Activated CD8-positive, alpha-beta T cell treated with anti-CD3 and anti-CD28 coated beads, Interleukin-2, amount 10 ng/mL, durations not matched to agents 7 days and 5 days (primary cell): ENCODE measurements at regions of chr6 and their contacts with region 1.

Region 1: GRCh38 chr6:3929281-3929798 is 80.2 kb downstream of the FAM50B start:
- DNase-seq: no peak
- ATAC-seq: no peak
- H3K4me3 Mint-ChIP-seq: no peak overlapping the region
- H3K27ac Mint-ChIP-seq: no peak overlapping the region
- H3K4me1 Mint-ChIP-seq: no peaks in the 10 kb centered on the region
- H3K27me3 Mint-ChIP-seq: peaks cover 5% of the 10 kb centered on the region

Region 2: GRCh38 chr6:3748208-3749066 is 180.9 kb before region 1 on chr6:
- CTCF ChIA-PET with region 1: interaction called, 23 read pairs
- POLR2A ChIA-PET with region 1: interaction called, 3 read pairs
- DNase-seq: peak; percentile 46
- ATAC-seq: no peak
- H3K4me3 Mint-ChIP-seq: no peak overlapping the region
- H3K27ac Mint-ChIP-seq: no peak overlapping the region
- H3K4me1 Mint-ChIP-seq: no peaks in the 10 kb centered on the region
- H3K27me3 Mint-ChIP-seq: peaks cover 42% of the 10 kb centered on the region